ENCODE measurements at regions of chr1 and their contacts with region 1.

Region 1: DNA sequence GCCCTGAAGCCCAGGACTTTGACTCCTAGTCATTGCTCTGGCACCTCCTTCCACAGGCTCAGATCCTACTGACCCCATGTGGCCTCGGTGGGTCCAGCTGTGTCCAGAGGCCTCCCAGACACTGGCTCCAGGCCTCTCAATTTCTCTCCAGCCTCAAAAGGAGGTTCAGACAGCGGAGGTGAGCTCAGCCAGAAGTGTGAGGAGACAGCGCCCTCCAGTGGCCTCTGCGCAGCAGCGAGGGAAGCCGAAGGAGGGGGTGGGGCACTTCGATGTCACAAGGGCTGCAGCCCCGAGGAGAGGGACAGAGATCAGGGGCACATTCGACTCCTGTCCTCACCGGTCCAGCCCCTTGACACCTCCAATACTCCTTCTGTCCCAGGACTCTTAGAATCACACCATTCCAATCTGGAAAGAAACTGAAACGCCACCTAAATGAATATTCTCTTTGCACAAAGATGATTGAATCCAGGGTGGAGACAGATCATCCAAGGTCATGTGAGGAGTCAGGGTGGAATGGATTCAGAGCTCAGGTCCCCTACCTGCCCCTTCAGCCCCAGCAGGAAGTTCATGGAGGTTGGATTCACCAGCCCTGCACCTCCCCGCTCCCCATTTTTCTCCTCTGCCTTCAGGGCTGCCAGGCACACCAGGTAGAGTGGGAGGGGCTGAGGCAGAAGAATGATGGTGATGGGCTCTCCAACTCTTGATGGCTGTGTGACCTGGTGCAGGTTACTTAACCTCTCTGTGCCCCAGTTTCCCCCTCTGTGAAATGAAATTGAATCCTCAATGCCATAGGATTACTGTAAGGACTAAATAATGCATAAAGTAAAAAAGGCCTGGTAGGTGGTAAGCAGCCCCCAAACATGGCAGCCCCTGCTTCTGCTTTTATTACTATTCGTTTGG is 34.8 kb upstream of the ZBTB40 start:
- DNase-seq: peak; percentile 80 to 88 (median 84)
- ATAC-seq: peak; percentile 43
- H3K4me3 ChIP-seq: no peak overlapping the region
- H3K27ac ChIP-seq: peak overlapping the region in 1 of 4 donors; percentile 10
- H3K4me1 ChIP-seq: peaks cover 52% of the 10 kb centered on the region
- H3K27me3 ChIP-seq: no peaks in the 10 kb centered on the region
- CTCF ChIP-seq: peak; percentile 92 to 98 (median 96)
- POLR2A ChIP-seq: no peak

Region 2: GRCh38 chr1:22105611-22106207 is 311.1 kb before region 1 on chr1:
- intact Hi-C with region 1: loop called (anchors 2 kb)
- DNase-seq: peak in 3 of 4 donors; percentile 46 to 53 (median 47)
- ATAC-seq: peak; percentile 69
- H3K4me3 ChIP-seq: no peak overlapping the region
- H3K27ac ChIP-seq: no peak overlapping the region
- H3K4me1 ChIP-seq: no peaks in the 10 kb centered on the region
- H3K27me3 ChIP-seq: no peaks in the 10 kb centered on the region
- CTCF ChIP-seq: peak; percentile 40 to 81 (median 78)
- POLR2A ChIP-seq: no peak

Region 3: DNA sequence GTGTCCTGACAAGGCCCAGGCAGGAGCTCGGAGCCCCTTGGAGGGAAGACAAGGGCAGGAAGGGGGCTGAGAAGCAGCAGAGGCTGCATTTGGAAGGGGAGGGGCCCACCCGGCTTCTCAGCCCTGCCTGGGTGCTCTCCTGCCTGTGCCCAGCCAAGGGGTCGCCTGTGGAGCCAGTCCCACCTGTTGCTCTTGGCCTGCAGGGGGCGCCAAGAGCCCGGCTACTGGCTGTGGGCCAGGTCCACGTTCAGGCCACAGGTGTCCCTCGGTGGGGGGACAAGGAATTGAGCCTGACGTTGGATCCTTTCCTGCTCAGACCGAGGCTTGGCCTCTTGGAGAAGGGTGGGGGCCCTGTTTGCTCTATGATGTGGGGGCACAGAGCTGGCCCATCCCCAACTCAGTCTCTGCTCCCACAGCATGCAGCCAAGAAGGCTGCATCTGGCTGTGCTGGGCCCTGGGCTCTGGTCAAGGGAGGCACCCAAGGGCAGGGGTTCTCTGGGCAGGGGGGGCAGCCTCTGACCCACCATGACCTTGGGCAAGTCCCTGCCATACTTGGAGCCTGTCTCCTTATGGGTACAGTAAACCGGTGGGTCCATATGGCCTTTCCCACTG is 284.8 kb before region 1 on chr1:
- intact Hi-C with region 1: loop called (anchors 10 kb)
- DNase-seq: peak; percentile 49 to 75 (median 58)
- ATAC-seq: peak; percentile 57
- H3K4me3 ChIP-seq: no peak overlapping the region
- H3K27ac ChIP-seq: no peak overlapping the region
- H3K4me1 ChIP-seq: peaks cover 8% of the 10 kb centered on the region
- H3K27me3 ChIP-seq: no peaks in the 10 kb centered on the region
- CTCF ChIP-seq: peak; percentile 61 to 79 (median 77)
- POLR2A ChIP-seq: no peak

Region 4: GRCh38 chr1:22536506-22536905 is 119.7 kb after region 1 on chr1:
- intact Hi-C with region 1: no loop called
- DNase-seq: peak in 1 of 4 donors; percentile 18
- ATAC-seq: no peak
- H3K4me3 ChIP-seq: no peak overlapping the region
- H3K27ac ChIP-seq: no peak overlapping the region
- H3K4me1 ChIP-seq: peaks cover 54% of the 10 kb centered on the region
- H3K27me3 ChIP-seq: no peaks in the 10 kb centered on the region
- CTCF ChIP-seq: no peak
- POLR2A ChIP-seq: no peak

Region 5: GRCh38 chr1:22691031-22691753 is 274.4 kb after region 1 on chr1:
- intact Hi-C with region 1: no loop called
- DNase-seq: no peak
- ATAC-seq: no peak
- H3K4me3 ChIP-seq: no peak overlapping the region
- H3K27ac ChIP-seq: no peak overlapping the region
- H3K4me1 ChIP-seq: no peaks in the 10 kb centered on the region
- H3K27me3 ChIP-seq: no peaks in the 10 kb centered on the region
- CTCF ChIP-seq: no peak
- POLR2A ChIP-seq: no peak

Region 6: GRCh38 chr1:23263380-23263887 is 846.6 kb after region 1 on chr1:
- intact Hi-C with region 1: no loop called
- DNase-seq: no peak
- ATAC-seq: no peak
- H3K4me3 ChIP-seq: no peak overlapping the region
- H3K27ac ChIP-seq: no peak overlapping the region
- H3K4me1 ChIP-seq: no peaks in the 10 kb centered on the region
- H3K27me3 ChIP-seq: no peaks in the 10 kb centered on the region
- CTCF ChIP-seq: no peak
- POLR2A ChIP-seq: no peak